ENCODE measurements at regions of chr13 and their contacts with region 1.

Region 1: GRCh38 chr13:42594970-42595571 is 21.1 kb downstream of the TNFSF11 start:
- DNase-seq: peak; percentile 23 to 43 (median 38)
- H3K4me3 ChIP-seq: no peak overlapping the region
- H3K4me3 Mint-ChIP-seq: no peak overlapping the region
- H3K27ac ChIP-seq: no peak overlapping the region
- H3K27ac Mint-ChIP-seq: peak overlapping the region in 1 of 7 donors; percentile 39
- H3K4me1 ChIP-seq: no peaks in the 10 kb centered on the region
- H3K4me1 Mint-ChIP-seq: peaks cover 0 to 2% (median under 1%) of the 10 kb centered on the region in 4 donors
- H3K27me3 ChIP-seq: no peaks in the 10 kb centered on the region
- H3K27me3 Mint-ChIP-seq: peaks cover 0 to 2% of the 10 kb centered on the region in 2 donors

Region 2: DNA sequence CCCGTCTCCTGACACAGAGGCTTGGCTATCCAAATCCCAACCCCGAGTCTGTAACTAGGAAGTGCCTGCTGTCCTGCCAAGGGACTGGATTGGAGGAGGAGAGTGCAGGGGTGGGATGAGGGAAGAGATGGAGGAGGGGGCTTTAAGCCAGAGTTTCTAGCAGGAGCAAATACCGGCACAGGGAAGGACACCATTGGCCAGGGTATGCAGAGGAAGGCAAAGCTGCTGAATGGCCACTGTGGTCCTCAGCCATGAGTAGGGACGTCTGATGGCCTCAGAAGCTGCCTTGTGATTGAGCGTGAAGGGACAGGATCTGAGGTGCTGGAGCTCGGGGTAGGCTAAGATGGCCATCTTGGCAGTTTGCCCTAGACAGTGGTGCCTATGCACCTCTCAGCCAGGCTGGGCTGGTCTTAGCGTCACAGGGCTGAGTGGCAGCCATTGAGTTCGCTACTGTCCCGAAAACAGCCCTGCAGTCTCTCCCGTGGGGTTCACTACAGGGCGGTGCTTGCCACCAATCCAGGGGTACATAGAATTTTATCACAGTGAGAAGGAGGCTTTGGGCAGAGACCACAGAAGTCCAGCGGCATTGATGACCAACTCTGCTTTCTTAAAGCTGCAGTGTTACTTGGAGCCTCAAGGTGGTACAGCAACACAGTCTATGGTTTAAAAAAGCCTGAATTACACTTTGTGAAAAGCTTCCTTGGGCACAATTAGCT is 261.3 kb before region 1 on chr13:
- CTCF ChIA-PET with region 1: interaction called, 25 read pairs
- POLR2A ChIA-PET with region 1: no interaction called
- intact Hi-C with region 1: loop called (anchors 1 kb)
- DNase-seq: peak in 4 of 5 donors; percentile 24 to 40 (median 32)
- H3K4me3 ChIP-seq: no peak overlapping the region
- H3K4me3 Mint-ChIP-seq: no peak overlapping the region
- H3K27ac ChIP-seq: no peak overlapping the region
- H3K27ac Mint-ChIP-seq: peak overlapping the region in 2 of 7 donors; percentile 18 to 55
- H3K4me1 ChIP-seq: peaks cover 22% of the 10 kb centered on the region
- H3K4me1 Mint-ChIP-seq: peaks cover 13 to 27% (median 19%) of the 10 kb centered on the region in 4 donors
- H3K27me3 ChIP-seq: no peaks in the 10 kb centered on the region
- H3K27me3 Mint-ChIP-seq: no peaks in the 10 kb centered on the region

Region 3: DNA sequence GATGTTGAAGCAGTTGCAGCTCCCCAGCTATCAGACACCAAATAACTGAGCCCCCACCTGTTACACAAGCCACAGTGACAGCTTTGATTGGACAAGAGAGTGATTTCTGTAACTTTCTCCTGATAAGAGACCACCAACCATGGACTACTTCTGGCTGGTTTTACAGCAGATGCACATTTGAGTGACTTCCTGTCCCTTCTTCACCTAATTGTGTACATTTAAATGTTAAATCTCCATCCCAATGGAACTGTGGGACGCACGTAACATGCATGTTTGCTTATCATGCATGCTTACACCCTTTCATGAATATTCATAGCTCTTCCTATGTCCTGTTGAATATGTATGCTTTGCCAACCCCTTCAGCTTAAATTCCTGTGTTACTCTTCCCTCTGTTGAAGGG is 27.2 kb before region 1 on chr13:
- CTCF ChIA-PET with region 1: interaction called, 12 read pairs
- POLR2A ChIA-PET with region 1: no interaction called
- intact Hi-C with region 1: no loop called
- DNase-seq: no peak
- H3K4me3 ChIP-seq: no peak overlapping the region
- H3K4me3 Mint-ChIP-seq: no peak overlapping the region
- H3K27ac ChIP-seq: no peak overlapping the region
- H3K27ac Mint-ChIP-seq: no peak overlapping the region
- H3K4me1 ChIP-seq: no peaks in the 10 kb centered on the region
- H3K4me1 Mint-ChIP-seq: peaks cover 0 to 1% (median 0%) of the 10 kb centered on the region in 4 donors
- H3K27me3 ChIP-seq: no peaks in the 10 kb centered on the region
- H3K27me3 Mint-ChIP-seq: no peaks in the 10 kb centered on the region

Region 4: GRCh38 chr13:42580644-42581043 is 14.4 kb before region 1 on chr13:
- CTCF ChIA-PET with region 1: interaction called, 27 read pairs
- POLR2A ChIA-PET with region 1: no interaction called
- intact Hi-C with region 1: no loop called
- DNase-seq: no peak
- H3K4me3 ChIP-seq: no peak overlapping the region
- H3K4me3 Mint-ChIP-seq: no peak overlapping the region
- H3K27ac ChIP-seq: no peak overlapping the region
- H3K27ac Mint-ChIP-seq: no peak overlapping the region
- H3K4me1 ChIP-seq: peaks cover 5% of the 10 kb centered on the region
- H3K4me1 Mint-ChIP-seq: peaks cover 3 to 21% (median 10%) of the 10 kb centered on the region in 4 donors
- H3K27me3 ChIP-seq: no peaks in the 10 kb centered on the region
- H3K27me3 Mint-ChIP-seq: peaks cover 5 to 7% of the 10 kb centered on the region in 2 donors

Region 5: DNA sequence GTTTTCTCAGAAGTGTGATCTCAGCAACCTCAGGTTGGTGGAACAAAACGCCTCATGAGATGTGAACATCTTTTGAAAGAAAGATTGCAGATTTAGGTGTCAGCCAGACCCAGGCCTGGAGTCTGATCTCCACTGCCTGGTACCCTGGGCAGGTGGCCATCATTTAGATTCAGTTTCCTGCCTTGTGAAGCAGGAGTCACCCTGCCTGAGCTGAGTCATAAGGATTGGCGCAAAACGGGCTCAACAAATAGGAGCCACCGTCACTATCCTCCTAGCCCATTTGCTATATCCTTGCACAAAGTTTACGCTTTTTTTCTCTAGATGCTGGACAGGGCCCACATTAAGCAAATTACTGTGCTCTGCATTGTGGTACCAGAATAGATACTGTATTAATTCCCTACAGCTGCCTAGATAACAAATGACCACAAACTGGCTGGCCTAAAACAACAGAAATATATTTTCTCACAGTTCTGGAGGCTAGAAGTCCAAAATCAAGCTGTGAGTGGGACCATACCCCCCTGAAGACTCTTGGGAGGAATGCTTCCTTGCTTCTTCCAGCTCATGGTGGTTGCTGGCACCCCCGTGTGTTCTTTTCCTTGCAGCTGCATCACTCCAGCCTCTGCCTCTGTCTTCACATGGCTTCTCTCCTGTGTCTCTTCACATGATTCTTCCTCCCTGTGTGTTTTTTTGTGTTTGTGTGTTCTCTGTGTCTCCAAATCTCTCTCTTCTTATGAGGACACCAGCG is 17.1 kb after region 1 on chr13:
- CTCF ChIA-PET with region 1: interaction called, 11 read pairs
- POLR2A ChIA-PET with region 1: no interaction called
- intact Hi-C with region 1: no loop called
- DNase-seq: no peak
- H3K4me3 ChIP-seq: no peak overlapping the region
- H3K4me3 Mint-ChIP-seq: no peak overlapping the region
- H3K27ac ChIP-seq: no peak overlapping the region
- H3K27ac Mint-ChIP-seq: no peak overlapping the region
- H3K4me1 ChIP-seq: no peaks in the 10 kb centered on the region
- H3K4me1 Mint-ChIP-seq: peaks cover 0 to 1% (median 0%) of the 10 kb centered on the region in 4 donors
- H3K27me3 ChIP-seq: peaks cover 3% of the 10 kb centered on the region
- H3K27me3 Mint-ChIP-seq: peaks cover 1 to 2% of the 10 kb centered on the region in 2 donors

Region 6: DNA sequence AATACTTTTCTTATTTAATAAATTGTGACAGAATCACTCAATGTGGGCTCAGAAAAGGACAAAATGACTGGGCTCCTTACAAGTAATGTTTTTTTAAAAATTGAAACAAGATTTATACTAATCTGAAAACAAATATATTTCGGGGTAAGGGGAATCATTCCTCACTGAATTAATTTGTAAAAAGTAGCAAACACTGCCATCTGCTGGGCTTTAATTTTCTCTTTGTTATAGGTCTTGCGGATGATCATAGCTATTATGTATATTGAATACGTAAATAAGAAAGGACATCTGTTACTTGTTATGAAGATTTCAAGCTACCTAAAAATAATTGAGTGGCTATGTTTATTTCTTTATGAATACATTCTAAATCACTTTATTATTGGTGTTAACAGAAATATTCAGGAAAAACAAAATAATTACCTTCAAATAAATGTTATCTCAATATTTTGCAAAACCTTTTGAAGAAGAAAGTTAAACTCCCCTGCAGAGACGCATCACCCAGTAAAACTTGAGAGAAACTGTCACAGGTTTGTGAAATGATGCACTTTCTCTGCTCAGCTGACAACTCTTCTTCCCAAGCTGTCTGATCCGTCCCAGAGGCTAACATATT is 1209.5 kb after region 1 on chr13:
- CTCF ChIA-PET with region 1: interaction called, 26 read pairs
- POLR2A ChIA-PET with region 1: no interaction called
- intact Hi-C with region 1: no loop called
- DNase-seq: peak in 4 of 5 donors; percentile 33 to 42 (median 38)
- H3K4me3 ChIP-seq: no peak overlapping the region
- H3K4me3 Mint-ChIP-seq: no peak overlapping the region
- H3K27ac ChIP-seq: no peak overlapping the region
- H3K27ac Mint-ChIP-seq: no peak overlapping the region
- H3K4me1 ChIP-seq: no peaks in the 10 kb centered on the region
- H3K4me1 Mint-ChIP-seq: peaks cover 0 to 3% (median 0%) of the 10 kb centered on the region in 4 donors
- H3K27me3 ChIP-seq: no peaks in the 10 kb centered on the region
- H3K27me3 Mint-ChIP-seq: peaks cover 3 to 8% of the 10 kb centered on the region in 2 donors

Measured in CD4-positive, alpha-beta memory T cell (primary cell).